T-cell (primary cell): ENCODE measurements at regions of chr12 and their contacts with region 1.

Region 1: GRCh38 chr12:101287357-101287756 is 7.5 kb downstream of the UTP20 start:
- DNase-seq: no peak
- ATAC-seq: no peak
- H3K4me3 ChIP-seq: no peak overlapping the region
- H3K4me3 Mint-ChIP-seq: no peak overlapping the region
- H3K27ac ChIP-seq: no peak overlapping the region
- H3K27ac Mint-ChIP-seq: no peak overlapping the region
- H3K4me1 ChIP-seq: no peaks in the 10 kb centered on the region
- H3K4me1 Mint-ChIP-seq: peaks cover 3 to 6% (median 3%) of the 10 kb centered on the region in 3 donors
- H3K27me3 ChIP-seq: no peaks in the 10 kb centered on the region
- H3K27me3 Mint-ChIP-seq: no peaks in the 10 kb centered on the region

Region 2: GRCh38 chr12:101238800-101239329 is 48.5 kb before region 1 on chr12:
- CTCF ChIA-PET with region 1: no interaction called
- POLR2A ChIA-PET with region 1: no interaction called
- DNase-seq: no peak
- ATAC-seq: no peak
- H3K4me3 ChIP-seq: no peak overlapping the region
- H3K4me3 Mint-ChIP-seq: no peak overlapping the region
- H3K27ac ChIP-seq: no peak overlapping the region
- H3K27ac Mint-ChIP-seq: no peak overlapping the region
- H3K4me1 ChIP-seq: no peaks in the 10 kb centered on the region
- H3K4me1 Mint-ChIP-seq: no peaks in the 10 kb centered on the region
- H3K27me3 ChIP-seq: peaks cover 0 to 7% of the 10 kb centered on the region in 2 experiments
- H3K27me3 Mint-ChIP-seq: peaks cover 3 to 5% of the 10 kb centered on the region in 2 donors

Region 3: DNA sequence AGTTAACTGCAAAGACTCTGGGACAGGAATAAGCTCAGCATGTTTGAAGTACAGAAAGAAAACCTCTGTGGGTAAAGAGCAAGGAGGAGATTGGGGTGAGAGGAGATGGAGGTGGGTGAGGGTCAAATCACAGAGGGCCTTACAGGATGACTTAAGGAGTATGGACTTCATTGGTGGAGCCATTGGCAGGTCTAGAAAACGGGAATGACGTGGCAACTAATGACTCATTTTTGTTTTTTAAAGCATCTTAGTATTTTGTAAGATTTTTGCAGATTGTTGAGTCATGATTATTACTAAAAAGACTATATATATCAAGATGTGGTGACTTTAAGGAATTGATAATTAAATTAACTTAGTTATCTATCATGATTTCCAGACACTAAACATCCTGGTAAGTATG is 11.1 kb after region 1 on chr12:
- CTCF ChIA-PET with region 1: no interaction called
- POLR2A ChIA-PET with region 1: no interaction called
- DNase-seq: no peak
- ATAC-seq: no peak
- H3K4me3 ChIP-seq: no peak overlapping the region
- H3K4me3 Mint-ChIP-seq: no peak overlapping the region
- H3K27ac ChIP-seq: no peak overlapping the region
- H3K27ac Mint-ChIP-seq: no peak overlapping the region
- H3K4me1 ChIP-seq: no peaks in the 10 kb centered on the region
- H3K4me1 Mint-ChIP-seq: no peaks in the 10 kb centered on the region
- H3K27me3 ChIP-seq: no peaks in the 10 kb centered on the region
- H3K27me3 Mint-ChIP-seq: no peaks in the 10 kb centered on the region

Region 4: DNA sequence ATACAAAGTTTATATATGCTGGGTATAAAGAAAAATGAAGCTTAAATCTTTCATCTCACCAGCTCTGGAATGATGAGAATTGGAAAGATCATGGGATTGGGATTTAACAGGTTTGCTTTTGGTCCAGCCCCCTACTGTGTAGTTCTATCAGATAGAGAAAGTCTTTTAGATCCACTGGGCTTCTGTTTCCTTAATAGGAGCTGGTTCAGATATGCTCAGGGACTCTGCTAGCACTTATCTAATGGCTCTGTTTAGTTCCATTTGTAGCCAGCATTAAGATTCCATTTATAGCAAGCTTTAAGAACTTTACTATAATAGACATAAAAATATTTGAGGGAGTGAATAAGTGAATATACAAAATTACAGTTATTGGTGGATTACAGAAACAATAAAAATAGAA is 35.1 kb after region 1 on chr12:
- CTCF ChIA-PET with region 1: interaction called in 1 of 2 experiments, 12 read pairs
- POLR2A ChIA-PET with region 1: no interaction called
- DNase-seq: no peak
- ATAC-seq: no peak
- H3K4me3 ChIP-seq: no peak overlapping the region
- H3K4me3 Mint-ChIP-seq: no peak overlapping the region
- H3K27ac ChIP-seq: no peak overlapping the region
- H3K27ac Mint-ChIP-seq: no peak overlapping the region
- H3K4me1 ChIP-seq: no peaks in the 10 kb centered on the region
- H3K4me1 Mint-ChIP-seq: no peaks in the 10 kb centered on the region
- H3K27me3 ChIP-seq: no peaks in the 10 kb centered on the region
- H3K27me3 Mint-ChIP-seq: no peaks in the 10 kb centered on the region